ENCODE measurements at regions of chr2 and their contacts with region 1.

Region 1: DNA sequence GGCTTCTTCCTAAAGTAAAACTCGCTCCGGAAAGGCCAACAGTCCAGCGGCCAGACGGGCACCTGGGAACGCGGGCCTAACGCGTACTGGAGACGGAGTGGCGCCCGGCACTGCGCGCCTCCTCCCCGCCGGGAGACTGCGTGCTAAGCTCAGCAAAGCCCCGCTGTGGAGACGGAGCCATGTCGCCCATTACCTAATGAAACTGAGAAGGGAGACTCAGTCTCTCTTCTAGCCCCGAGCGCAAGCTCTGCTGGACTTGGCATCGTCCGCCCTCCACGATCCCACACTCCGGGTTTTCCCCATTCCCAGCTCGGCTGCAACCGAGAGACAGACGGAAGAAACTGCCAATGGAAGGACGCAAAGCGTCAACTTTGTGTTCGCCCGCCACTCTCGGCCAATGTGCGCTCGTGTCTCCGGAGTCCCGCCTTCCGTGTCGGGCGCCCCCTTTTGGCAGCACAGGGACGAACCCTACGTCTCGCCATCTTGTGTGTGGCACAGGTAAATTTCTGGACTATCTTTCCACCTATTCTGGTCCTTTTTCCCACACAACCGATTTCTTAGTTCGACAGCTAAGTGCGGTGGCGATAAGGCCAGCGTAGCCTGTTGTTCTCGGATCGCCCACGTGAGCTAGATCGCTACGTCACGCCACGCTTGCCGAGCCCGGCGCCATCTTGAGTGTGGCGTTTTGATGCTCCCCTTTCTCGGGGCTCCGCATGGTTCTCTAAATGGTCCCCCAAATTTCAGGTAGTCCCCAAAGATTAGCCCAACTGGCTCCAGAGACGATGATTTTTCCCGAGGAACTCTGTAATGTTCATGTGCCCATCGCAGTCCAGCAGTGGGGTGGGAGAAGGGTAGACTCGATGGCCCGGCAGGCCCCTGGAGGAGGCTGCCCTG is 1.3 kb upstream of the PTMA start:
- DNase-seq: peak; percentile 99
- H3K4me3 Mint-ChIP-seq: peak overlapping the region; percentile 89
- H3K27ac Mint-ChIP-seq: peak overlapping the region; percentile 100
- H3K4me1 Mint-ChIP-seq: peaks cover 9% of the 10 kb centered on the region
- H3K27me3 Mint-ChIP-seq: no peaks in the 10 kb centered on the region
- CTCF ChIP-seq: peak; percentile 85

Region 2: DNA sequence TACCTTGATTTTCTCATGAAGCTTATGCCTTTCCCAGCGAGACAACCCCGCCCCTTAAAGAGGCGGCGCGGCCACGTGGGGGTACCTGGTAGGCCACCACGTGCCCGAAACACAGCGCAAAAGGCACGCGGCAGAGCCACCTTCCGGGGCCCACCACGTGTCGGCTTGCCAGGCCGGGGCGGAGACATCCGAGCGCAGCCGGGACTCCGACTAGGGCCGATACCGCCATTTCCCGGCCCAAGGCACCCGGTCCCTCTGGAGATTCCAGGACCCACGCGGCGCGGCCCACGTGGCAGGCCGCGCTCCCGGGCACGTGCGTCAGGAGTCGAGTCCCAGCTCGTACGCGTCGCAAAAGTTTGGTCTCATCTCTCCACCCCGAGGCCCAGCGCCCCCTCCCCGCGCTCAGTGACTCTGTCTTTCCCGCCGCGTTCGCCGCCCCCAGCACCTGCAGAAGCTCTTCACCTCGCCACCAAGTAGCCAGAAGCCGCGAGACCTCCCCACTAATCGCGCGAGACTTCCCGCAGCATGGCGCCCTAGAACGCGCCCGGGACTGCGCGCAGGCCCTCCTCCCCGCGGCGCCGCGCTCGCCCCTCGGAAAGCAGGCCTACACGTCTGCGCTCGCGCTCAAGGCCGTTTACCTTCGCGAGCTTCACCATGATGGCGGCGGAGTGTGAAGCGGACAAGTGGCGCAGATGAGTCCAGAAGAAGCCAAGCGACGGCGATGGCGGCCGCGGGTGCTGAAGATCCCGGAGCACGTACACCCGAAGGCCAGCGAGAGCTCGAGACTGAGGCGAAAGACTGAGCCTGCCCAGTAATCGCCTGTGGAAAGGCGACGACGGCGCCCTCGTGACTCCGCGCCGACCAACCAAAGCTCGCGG is 243.0 kb before region 1 on chr2 and contains the start of gene NCL:
- CTCF ChIA-PET with region 1: no interaction called
- POLR2A ChIA-PET with region 1: interaction called, 20 read pairs
- intact Hi-C with region 1: no loop called
- DNase-seq: peak; percentile 98
- H3K4me3 Mint-ChIP-seq: peak within 1 kb of the TSS; percentile 88
- H3K27ac Mint-ChIP-seq: peak within 1 kb of the TSS; percentile 100
- H3K4me1 Mint-ChIP-seq: peaks cover 33% of the 10 kb centered on the region
- H3K27me3 Mint-ChIP-seq: no peaks in the 10 kb centered on the region
- CTCF ChIP-seq: no peak
- total RNA-seq, gene NCL: 578 and 778 TPM in 2 replicates

Region 3: GRCh38 chr2:231642631-231643494 is 64.1 kb before region 1 on chr2:
- CTCF ChIA-PET with region 1: interaction called, 5 read pairs
- POLR2A ChIA-PET with region 1: interaction called, 13 read pairs
- intact Hi-C with region 1: no loop called
- DNase-seq: peak; percentile 99
- H3K4me3 Mint-ChIP-seq: peak overlapping the region; percentile 59
- H3K27ac Mint-ChIP-seq: peak overlapping the region; percentile 97
- H3K4me1 Mint-ChIP-seq: peaks cover 30% of the 10 kb centered on the region
- H3K27me3 Mint-ChIP-seq: no peaks in the 10 kb centered on the region
- CTCF ChIP-seq: no peak

Region 4: DNA sequence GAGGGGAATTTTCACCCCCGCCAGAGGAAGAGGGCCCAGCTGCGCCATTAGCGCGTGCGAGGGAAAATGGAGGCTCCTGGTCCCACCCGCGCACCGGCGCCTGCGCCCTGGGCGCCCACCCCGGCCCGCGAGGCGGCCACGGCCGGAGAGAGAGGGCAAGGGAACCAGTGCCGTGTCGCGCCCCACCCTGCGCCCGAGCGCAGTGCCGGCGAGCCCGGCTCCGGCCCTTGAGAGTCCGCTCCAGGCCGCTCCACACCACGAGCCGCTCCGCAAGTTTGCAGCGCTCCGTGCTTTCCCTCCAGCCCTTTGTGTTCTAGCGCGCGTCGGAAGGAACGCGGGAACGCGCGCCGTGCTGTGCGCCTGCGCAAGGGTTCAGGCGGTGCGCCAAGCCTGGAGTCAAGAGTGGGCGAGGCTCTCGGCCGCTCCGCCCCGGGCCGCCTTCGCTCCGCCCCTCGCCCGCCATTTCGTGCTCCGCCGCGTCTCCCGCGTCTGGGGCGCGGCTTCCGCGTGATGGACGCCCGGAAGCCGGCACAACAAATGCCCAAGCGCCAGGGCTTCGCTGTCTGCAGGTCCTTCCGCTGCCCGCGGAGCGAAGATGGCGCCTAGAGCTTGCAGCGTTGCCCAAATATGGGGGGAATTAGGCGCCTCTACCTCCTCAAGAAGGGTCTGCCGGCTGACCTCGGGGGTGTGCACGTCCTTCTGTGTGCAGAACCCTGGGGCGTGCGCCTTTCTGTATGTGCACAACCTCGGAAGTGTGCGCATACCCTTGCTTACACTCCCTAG is 44.8 kb before region 1 on chr2:
- CTCF ChIA-PET with region 1: interaction called, 5 read pairs
- POLR2A ChIA-PET with region 1: interaction called, 17 read pairs
- intact Hi-C with region 1: no loop called
- DNase-seq: peak; percentile 97
- H3K4me3 Mint-ChIP-seq: peak overlapping the region; percentile 64
- H3K27ac Mint-ChIP-seq: peak overlapping the region; percentile 57
- H3K4me1 Mint-ChIP-seq: no peaks in the 10 kb centered on the region
- H3K27me3 Mint-ChIP-seq: no peaks in the 10 kb centered on the region
- CTCF ChIP-seq: no peak

Region 5: GRCh38 chr2:231696007-231696371 is 11.0 kb before region 1 on chr2:
- CTCF ChIA-PET with region 1: interaction called, 18 read pairs
- POLR2A ChIA-PET with region 1: interaction called, 11 read pairs
- intact Hi-C with region 1: no loop called
- DNase-seq: peak; percentile 41
- H3K4me3 Mint-ChIP-seq: no peak overlapping the region
- H3K27ac Mint-ChIP-seq: no peak overlapping the region
- H3K4me1 Mint-ChIP-seq: no peaks in the 10 kb centered on the region
- H3K27me3 Mint-ChIP-seq: no peaks in the 10 kb centered on the region
- CTCF ChIP-seq: no peak

Region 6: DNA sequence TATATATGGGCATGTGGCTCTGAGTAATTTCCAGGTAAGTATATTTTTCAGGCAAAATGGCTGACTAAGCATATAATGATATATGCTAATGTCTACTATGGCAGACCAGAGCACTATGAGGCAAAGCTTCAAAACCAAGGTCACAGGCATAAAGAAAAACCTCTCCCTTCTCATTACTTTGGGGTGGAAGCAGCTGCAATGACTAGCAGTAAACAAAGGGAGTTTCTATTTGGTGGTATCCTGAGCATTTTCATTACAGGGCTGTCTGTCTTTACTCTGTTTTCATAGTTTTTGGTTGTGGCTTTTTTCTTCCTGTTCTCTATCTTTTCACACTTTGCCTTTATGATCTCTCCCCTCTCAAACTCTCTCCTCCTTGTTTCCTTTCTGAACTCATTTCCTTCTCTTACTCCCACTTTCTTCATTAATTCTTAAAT is 58.5 kb after region 1 on chr2:
- CTCF ChIA-PET with region 1: no interaction called
- POLR2A ChIA-PET with region 1: no interaction called
- intact Hi-C with region 1: no loop called
- DNase-seq: no peak
- H3K4me3 Mint-ChIP-seq: no peak overlapping the region
- H3K27ac Mint-ChIP-seq: no peak overlapping the region
- H3K4me1 Mint-ChIP-seq: peaks cover 3% of the 10 kb centered on the region
- H3K27me3 Mint-ChIP-seq: no peaks in the 10 kb centered on the region
- CTCF ChIP-seq: no peak

Region 7: DNA sequence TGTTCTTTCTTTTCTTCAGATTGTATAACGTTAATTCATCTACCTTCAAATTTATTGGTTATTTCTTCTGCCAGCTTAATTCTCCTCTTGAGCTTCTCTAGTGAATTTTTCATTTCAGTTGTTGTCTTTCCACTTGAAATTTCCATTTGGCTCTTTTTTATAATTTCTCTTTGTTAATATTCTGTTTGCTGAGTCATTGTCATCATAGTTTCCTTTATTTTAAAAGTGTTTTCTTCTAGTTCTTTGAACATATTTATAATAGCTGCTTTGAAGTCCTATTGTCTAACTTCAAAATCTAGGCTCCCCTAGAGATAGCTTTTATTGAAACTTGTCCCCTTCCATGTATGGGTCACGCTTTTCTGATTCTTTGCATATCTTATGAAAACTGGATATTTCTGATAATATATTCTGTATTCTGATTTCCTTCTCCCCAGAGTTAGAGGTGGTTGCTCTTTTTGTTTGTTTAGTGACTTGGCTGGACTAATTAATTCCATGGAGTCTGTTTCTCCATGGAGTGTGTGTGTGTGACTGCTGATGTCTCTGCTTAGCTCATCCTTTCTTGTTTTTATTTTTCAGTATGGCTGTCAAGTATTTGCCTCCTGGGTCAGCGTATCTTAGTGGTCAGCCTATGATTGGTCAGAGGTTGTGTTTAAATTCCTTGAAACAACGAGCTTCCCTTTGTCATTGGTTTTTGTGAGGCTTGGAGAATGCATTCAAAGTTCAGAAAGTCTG is 302.1 kb after region 1 on chr2:
- CTCF ChIA-PET with region 1: no interaction called
- POLR2A ChIA-PET with region 1: no interaction called
- intact Hi-C with region 1: no loop called
- DNase-seq: no peak
- H3K4me3 Mint-ChIP-seq: no peak overlapping the region
- H3K27ac Mint-ChIP-seq: peak overlapping the region; percentile 37
- H3K4me1 Mint-ChIP-seq: no peaks in the 10 kb centered on the region
- H3K27me3 Mint-ChIP-seq: no peaks in the 10 kb centered on the region
- CTCF ChIP-seq: no peak

Measured in MCF 10A (cell line).